GM10248 (cell line): ENCODE measurements at regions of chr16 and their contacts with region 1.

Region 1: GRCh38 chr16:3938848-3939624 is 58.5 kb upstream of the CREBBP start:
- DNase-seq: peak; percentile 83
- CTCF ChIP-seq: peak; percentile 87

Region 2: GRCh38 chr16:3949287-3949686 is 10.3 kb after region 1 on chr16:
- CTCF ChIA-PET with region 1: interaction called, 10 read pairs
- POLR2A ChIA-PET with region 1: no interaction called
- DNase-seq: no peak
- CTCF ChIP-seq: no peak

Region 3: GRCh38 chr16:3983081-3983520 is 44.1 kb after region 1 on chr16:
- CTCF ChIA-PET with region 1: no interaction called
- POLR2A ChIA-PET with region 1: no interaction called
- DNase-seq: peak; percentile 64
- CTCF ChIP-seq: peak; percentile 71